PC-3 (cell line): ENCODE measurements at regions of chr10 and their contacts with region 1.

Region 1: DNA sequence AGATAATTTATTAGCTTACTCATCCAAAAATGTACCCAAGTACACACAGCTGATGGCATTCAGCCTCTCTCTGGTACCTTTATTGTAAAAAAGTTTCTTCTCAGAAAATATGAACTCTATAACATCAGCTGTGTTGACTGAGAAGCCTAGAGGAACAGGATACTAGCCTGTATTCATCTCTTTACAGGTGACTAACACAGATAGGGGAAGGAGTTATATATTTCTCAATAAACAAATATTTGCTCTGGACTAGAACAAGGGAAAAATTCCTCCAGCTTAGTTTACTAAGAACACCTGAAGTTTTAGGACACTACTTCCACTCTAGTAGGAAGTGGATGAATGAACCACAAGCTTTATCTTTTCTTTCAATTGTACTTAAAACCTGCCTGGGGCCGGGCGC is 67.8 kb downstream of the ZNF248 start:
- DNase-seq: peak; percentile 100
- ATAC-seq: peak; percentile 95
- H3K4me3 ChIP-seq: peak overlapping the region; percentile 37; the same call in 1 of the 2 replicates
- H3K27ac ChIP-seq: peak overlapping the region; percentile 80
- H3K4me1 ChIP-seq: peaks cover 27% of the 10 kb centered on the region
- H3K27me3 ChIP-seq: no peaks in the 10 kb centered on the region
- CTCF ChIP-seq: no peak

Region 2: DNA sequence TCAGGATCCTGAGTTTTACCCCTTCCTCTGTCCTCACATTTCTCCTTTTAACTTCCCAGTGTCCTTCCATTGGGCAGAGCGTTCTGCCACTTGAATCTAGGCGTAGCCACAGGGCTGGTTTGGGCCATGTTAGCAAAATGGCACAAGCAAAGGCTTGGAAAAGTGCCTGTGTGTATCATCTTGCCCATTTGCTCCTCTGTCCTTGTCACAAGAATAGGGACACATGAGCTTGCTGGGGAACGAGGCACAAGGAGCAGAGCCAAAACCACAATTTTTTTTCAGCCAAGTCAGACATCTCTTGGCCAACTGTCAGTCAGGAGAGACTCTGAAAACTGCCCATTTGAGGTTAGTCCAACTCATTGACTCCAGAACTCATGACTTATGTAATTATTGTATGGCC is 217.4 kb before region 1 on chr10:
- CTCF ChIA-PET with region 1: no interaction called
- POLR2A ChIA-PET with region 1: no interaction called
- intact Hi-C with region 1: no loop called
- DNase-seq: no peak
- ATAC-seq: no peak
- H3K4me3 ChIP-seq: no peak overlapping the region
- H3K27ac ChIP-seq: no peak overlapping the region
- H3K4me1 ChIP-seq: peaks cover 11% of the 10 kb centered on the region
- H3K27me3 ChIP-seq: no peaks in the 10 kb centered on the region
- CTCF ChIP-seq: no peak

Region 3: GRCh38 chr10:37774351-37774750 is 15.2 kb before region 1 on chr10:
- CTCF ChIA-PET with region 1: no interaction called
- POLR2A ChIA-PET with region 1: interaction called, 10 read pairs
- intact Hi-C with region 1: no loop called
- DNase-seq: no peak
- ATAC-seq: peak; percentile 17
- H3K4me3 ChIP-seq: no peak overlapping the region
- H3K27ac ChIP-seq: no peak overlapping the region
- H3K4me1 ChIP-seq: no peaks in the 10 kb centered on the region
- H3K27me3 ChIP-seq: no peaks in the 10 kb centered on the region
- CTCF ChIP-seq: no peak

Region 4: GRCh38 chr10:37831495-37832333 is 42.1 kb after region 1 on chr10:
- CTCF ChIA-PET with region 1: no interaction called
- POLR2A ChIA-PET with region 1: interaction called, 3 read pairs
- intact Hi-C with region 1: loop called (anchors 2 kb)
- DNase-seq: peak; percentile 28
- ATAC-seq: no peak
- H3K4me3 ChIP-seq: peak overlapping the region; percentile 8; the same call in 1 of the 2 replicates
- H3K27ac ChIP-seq: no peak overlapping the region
- H3K4me1 ChIP-seq: no peaks in the 10 kb centered on the region
- H3K27me3 ChIP-seq: no peaks in the 10 kb centered on the region
- CTCF ChIP-seq: no peak

Region 5: GRCh38 chr10:37976091-37976879 is 186.7 kb after region 1 on chr10 and contains the start of gene ZNF25:
- CTCF ChIA-PET with region 1: no interaction called
- POLR2A ChIA-PET with region 1: no interaction called
- intact Hi-C with region 1: loop called (anchors 1 kb)
- DNase-seq: peak; percentile 100
- ATAC-seq: peak; percentile 94
- H3K4me3 ChIP-seq: peak within 1 kb of the TSS; percentile 83
- H3K27ac ChIP-seq: peak within 1 kb of the TSS; percentile 59
- H3K4me1 ChIP-seq: peaks cover 11% of the 10 kb centered on the region; the same call in 1 of the 2 replicates
- H3K27me3 ChIP-seq: no peaks in the 10 kb centered on the region
- CTCF ChIP-seq: peak; percentile 97
- total RNA-seq, gene ZNF25: 2.4 and 3.9 TPM in 2 replicates